Activated CD4-positive, alpha-beta T cell treated with anti-CD3 and anti-CD28 coated beads, Interleukin-2, amount 10 ng/mL, durations not matched to agents 7 days and 5 days (primary cell): ENCODE measurements at regions of chr6 and their contacts with region 1.

Region 1: GRCh38 chr6:7154341-7155139 is 46.8 kb downstream of the RREB1 start:
- DNase-seq: no peak
- H3K4me3 Mint-ChIP-seq: no peak overlapping the region
- H3K27ac Mint-ChIP-seq: peak overlapping the region; percentile 62
- H3K4me1 Mint-ChIP-seq: peaks cover 65% of the 10 kb centered on the region
- H3K27me3 Mint-ChIP-seq: no peaks in the 10 kb centered on the region

Region 2: DNA sequence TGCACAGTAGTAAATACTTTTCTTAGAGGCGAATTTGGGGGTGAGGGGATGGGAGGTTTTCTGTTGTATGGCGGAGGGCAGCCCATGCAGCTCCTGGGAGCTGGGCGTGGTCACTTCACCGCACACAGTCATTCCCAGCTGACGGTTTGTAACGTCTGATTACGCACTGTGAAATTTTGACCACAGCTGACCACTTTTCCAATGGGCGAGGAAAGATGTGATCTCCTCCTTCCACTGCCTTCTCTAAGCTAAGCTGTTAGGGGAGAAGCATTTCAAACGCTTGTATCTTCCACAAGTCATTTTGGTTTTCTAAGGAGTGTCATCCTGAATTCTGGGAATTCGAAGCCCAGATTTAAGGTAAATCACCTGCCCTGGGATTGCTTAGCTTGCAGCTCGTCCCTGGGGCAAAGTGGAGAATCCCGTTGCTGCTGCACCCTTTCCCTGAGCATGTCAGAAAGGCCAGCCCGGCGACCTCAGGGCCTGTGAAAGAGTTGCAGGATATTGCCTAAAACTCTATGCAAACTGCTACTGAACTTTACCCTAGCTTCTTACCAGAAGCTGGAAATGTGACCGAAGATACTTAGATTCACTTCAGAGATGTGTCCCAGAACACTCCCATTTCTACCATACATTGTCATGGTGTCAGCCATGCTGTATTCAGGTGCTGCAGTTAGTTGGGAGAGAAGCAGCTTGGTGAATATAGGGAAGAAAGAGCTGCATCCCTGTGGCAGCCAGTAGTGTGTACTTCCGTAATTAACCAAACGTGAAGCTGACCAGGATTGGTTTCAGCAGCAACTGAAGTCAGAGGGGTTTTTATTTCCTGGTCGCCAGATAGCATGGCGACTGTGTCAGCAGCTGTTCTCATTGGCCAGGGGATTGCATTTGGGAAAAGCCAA is 12.1 kb after region 1 on chr6:
- CTCF ChIA-PET with region 1: interaction called, 10 read pairs
- POLR2A ChIA-PET with region 1: no interaction called
- DNase-seq: no peak
- H3K4me3 Mint-ChIP-seq: no peak overlapping the region
- H3K27ac Mint-ChIP-seq: no peak overlapping the region
- H3K4me1 Mint-ChIP-seq: peaks cover 21% of the 10 kb centered on the region
- H3K27me3 Mint-ChIP-seq: no peaks in the 10 kb centered on the region